Mammary epithelial cell (primary cell): ENCODE measurements at regions of chr10 and their contacts with region 1.

Region 1: DNA sequence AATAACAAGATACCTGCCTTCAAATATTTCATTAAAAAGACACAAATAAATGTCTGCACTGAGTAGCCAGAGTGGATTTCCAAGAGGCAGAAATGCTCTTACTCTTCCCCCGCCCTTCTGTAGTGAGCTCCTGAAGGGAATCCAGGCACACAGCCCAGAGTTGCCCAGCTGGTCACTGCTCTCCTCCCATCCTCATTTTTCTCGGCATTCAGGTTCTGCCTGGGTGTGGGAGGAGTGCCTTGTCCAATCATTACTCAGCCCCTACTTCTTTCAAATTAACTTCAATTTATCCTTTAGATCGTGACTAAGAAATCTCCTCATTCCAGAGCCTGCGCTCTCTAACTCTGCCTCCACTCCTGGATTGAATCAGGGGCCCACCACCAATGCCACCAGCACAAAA is 12.2 kb downstream of the CCDC6 start:
- DNase-seq: peak; percentile 85
- H3K4me3 ChIP-seq: no peak overlapping the region
- H3K27ac ChIP-seq: peak overlapping the region; percentile 34
- H3K4me1 ChIP-seq: peaks cover 30% of the 10 kb centered on the region
- H3K27me3 ChIP-seq: no peaks in the 10 kb centered on the region
- CTCF ChIP-seq: no peak

Region 2: DNA sequence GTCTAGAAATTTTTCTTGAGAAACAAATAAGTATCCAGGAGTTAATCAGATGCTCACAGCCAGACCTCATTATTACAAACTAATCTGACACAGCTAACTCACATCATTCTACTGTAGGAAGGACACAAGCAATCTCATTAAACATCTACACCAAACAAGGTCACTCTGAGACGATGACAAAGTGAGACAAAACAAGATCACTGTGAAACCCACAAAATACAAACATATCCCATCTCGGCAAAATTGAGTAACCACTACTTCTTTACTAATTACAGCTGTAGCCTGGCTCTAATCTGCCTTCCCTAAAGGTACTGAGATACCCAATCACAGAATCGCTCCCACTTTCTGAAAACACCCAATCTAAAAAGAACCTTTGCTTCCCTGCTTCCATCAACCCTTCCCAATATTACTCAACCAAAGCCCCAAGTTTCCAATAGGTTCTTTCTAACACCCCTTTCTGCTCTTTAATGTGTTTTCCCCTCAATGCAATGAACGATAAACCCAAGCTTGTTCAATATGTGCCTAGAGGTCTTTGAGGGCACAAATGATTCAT is 14.7 kb before region 1 on chr10:
- CTCF ChIA-PET with region 1: no interaction called
- dilution Hi-C with region 1: no loop called
- in situ Hi-C with region 1: no loop called
- intact Hi-C with region 1: loop called (anchors 2 kb)
- DNase-seq: no peak
- H3K4me3 ChIP-seq: no peak overlapping the region
- H3K27ac ChIP-seq: no peak overlapping the region
- H3K4me1 ChIP-seq: peaks cover 11% of the 10 kb centered on the region
- H3K27me3 ChIP-seq: no peaks in the 10 kb centered on the region
- CTCF ChIP-seq: no peak